ENCODE measurements at regions of chr6 and their contacts with region 1.

Region 1: DNA sequence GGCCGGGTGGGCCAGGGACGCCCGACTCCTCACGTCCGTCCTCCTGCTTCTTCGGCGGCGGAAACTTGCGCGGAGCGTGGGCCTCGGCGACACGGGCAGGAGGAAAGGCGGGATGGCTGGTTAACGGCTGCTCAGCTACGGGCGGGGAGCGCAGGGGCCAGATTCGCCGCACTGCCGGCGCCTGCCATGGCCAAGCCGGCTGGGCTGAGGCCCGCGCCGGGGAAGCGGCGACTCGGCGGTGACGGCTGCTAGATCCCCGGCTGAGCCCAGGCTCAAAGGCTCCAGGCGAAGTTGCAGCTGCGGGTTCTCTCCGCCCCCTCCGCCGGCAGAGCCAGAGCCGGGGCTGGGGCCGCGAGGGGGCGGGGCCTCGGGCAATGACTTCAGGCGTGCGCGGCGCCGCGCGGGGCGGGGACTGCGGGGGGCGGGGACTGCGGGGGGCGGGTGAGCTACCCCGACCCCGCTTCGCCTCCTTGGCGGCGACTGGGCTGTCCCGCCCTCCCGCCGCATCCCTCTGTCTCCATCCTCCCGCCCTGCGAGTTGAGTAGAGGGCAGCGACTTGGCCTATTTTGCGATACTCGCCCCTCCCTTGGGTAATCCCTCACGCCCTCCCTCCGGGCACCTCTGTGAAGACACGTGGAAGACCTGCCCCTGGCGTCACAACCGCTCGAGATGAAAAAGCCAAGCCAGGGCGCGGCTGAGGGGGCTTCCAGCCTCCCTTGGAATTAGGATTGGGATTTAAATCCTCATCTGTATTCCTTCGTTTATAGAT is at the start of gene CEP85L:
- DNase-seq: peak; percentile 97
- ATAC-seq: peak; percentile 99
- total RNA-seq, gene CEP85L: 16.7 TPM

Region 2: GRCh38 chr6:118776607-118777549 is 125.4 kb after region 1 on chr6:
- intact Hi-C with region 1: loop called (anchors 1 kb)
- DNase-seq: no peak
- ATAC-seq: peak; percentile 57

Region 3: GRCh38 chr6:118893807-118894424 is 242.4 kb after region 1 on chr6 and contains the start of gene ASF1A:
- intact Hi-C with region 1: loop called (anchors 10 kb)
- DNase-seq: peak; percentile 97
- ATAC-seq: peak; percentile 96
- total RNA-seq, gene ASF1A: 21.7 TPM